Activated B cell treated with CpG ODN at 0.5 μM for 24 hours (primary cell): ENCODE measurements at regions of chrX and their contacts with region 1.

Region 1: DNA sequence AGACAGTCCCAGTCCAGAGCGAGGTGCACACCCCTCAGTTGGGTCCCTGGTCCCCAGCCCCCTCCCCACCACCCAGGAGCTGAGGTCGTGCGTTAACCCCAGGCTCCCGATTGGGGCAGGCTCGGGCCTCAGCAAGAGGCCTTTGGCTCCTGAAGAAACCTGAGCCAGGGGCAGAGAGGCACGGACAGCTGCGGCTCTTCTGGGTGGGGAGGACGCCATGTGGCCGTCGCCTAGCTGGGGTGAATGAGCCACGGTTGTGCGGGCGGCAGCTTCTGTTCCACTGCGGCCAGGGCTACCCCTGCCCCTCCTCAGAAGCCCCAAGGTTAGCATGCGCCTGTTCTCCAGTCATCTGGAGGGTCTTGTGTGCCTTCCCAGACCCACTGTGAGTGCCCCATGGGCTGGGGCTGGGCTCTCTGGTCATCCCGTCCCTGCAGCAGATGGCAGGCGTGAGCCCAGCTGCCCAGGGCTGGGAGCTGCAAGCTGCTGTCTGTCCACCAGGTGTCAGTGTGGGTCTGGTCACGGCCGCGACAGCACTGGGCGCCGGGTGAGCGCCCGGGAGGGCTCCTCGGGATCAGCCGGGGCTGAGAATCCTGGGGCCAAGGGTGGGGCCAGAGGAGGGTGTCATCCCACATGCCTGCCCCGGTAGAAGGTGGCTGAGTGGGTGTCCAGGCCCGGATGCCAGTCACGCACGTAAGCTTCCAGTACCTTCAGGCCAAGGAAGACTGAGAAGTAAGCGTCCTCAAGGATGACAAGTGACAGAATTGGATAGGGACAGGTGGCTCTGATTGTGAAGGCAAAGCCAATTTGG is 21.9 kb downstream of the ATP2B3 start:
- DNase-seq: peak; percentile 42
- ATAC-seq: peak; percentile 94
- H3K4me3 Mint-ChIP-seq: no peak overlapping the region
- H3K27ac Mint-ChIP-seq: no peak overlapping the region
- H3K4me1 Mint-ChIP-seq: no peaks in the 10 kb centered on the region
- H3K27me3 Mint-ChIP-seq: peaks cover 3% of the 10 kb centered on the region
- CTCF ChIP-seq: no peak

Region 2: DNA sequence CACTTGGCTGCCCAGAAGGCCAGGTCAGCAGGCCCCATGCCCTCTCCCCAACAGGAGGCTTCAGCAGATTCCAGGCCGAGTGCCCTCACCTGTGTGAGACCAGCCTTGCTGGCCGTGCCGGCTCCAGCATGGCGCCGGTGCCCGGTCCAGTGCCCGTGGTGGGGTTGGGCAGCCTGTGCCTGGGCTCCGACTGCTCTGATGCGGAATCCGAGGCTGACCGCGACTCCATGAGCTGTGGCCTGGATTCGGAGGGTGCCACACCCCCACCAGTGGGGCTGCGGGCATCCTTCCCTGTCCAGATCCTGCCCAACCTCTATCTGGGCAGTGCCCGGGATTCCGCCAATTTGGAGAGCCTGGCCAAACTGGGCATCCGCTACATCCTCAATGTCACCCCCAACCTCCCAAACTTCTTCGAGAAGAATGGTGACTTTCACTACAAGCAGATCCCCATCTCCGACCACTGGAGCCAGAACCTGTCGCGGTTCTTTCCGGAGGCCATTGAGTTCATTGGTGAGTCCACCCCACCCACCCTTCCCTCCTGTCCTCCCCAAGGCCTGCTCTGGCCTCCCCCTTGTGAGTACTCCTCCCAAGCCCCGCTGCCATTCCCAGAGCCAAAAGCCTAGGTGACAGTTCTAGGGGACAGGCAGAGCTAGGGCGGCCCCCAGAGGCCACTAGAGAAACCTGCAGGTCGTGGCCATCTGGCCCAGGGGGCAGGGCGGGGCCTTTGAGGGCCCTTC is 110.0 kb after region 1 on chrX:
- CTCF ChIA-PET with region 1: interaction called, 13 read pairs
- POLR2A ChIA-PET with region 1: no interaction called
- intact Hi-C with region 1: loop called (anchors 1 kb)
- DNase-seq: no peak
- ATAC-seq: peak; percentile 80
- H3K4me3 Mint-ChIP-seq: no peak overlapping the region
- H3K27ac Mint-ChIP-seq: no peak overlapping the region
- H3K4me1 Mint-ChIP-seq: no peaks in the 10 kb centered on the region
- H3K27me3 Mint-ChIP-seq: peaks cover 1% of the 10 kb centered on the region
- CTCF ChIP-seq: no peak

Region 3: DNA sequence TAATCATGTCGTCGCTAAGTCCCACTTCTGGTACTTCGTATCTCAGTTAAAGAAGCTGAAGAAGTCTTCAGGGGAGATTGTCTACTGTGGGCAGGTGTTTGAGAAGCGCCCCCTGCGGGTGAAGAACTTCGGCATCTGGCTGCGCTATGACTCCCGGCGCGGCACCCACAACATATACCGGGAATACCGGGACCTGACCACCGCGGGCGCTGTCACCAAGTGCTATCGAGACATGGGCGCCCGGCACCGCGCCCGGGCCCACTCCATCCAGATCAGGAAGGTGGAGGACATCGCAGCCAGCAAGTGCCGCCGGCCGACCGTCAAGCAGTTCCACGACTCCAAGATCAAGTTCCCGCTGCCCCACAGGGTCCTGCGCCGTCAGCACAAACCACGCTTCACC is 122.9 kb after region 1 on chrX:
- CTCF ChIA-PET with region 1: interaction called, 30 read pairs
- POLR2A ChIA-PET with region 1: no interaction called
- intact Hi-C with region 1: no loop called
- DNase-seq: peak; percentile 44
- ATAC-seq: no peak
- H3K4me3 Mint-ChIP-seq: peak overlapping the region; percentile 55
- H3K27ac Mint-ChIP-seq: no peak overlapping the region
- H3K4me1 Mint-ChIP-seq: peaks cover 2% of the 10 kb centered on the region
- H3K27me3 Mint-ChIP-seq: peaks cover 11% of the 10 kb centered on the region
- CTCF ChIP-seq: no peak

Region 4: DNA sequence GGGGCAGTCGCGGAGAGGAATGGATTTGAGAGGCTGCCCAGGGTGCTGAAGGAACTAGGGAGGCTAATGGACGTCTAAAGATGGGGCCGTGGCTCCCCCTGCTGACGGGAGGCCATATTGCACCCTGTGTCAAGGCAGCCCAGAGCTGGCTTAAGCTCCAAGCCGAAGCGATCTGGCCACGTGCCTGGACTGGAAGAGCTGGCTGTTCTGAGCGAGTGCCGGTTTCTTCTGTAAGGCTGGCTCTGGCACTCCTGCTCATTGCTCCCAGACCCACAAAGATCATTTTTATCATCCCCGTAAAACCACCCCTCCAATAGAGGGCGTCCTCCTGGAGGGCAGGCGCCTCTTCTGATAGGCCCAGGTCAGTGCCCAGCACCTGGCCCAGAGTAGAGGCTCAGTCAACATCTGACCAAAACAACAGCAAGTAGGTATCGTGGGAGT is 128.6 kb after region 1 on chrX:
- CTCF ChIA-PET with region 1: interaction called, 30 read pairs
- POLR2A ChIA-PET with region 1: no interaction called
- intact Hi-C with region 1: loop called (anchors 1 kb)
- DNase-seq: peak; percentile 66
- ATAC-seq: peak; percentile 90
- H3K4me3 Mint-ChIP-seq: peak overlapping the region; percentile 68
- H3K27ac Mint-ChIP-seq: no peak overlapping the region
- H3K4me1 Mint-ChIP-seq: peaks cover 5% of the 10 kb centered on the region
- H3K27me3 Mint-ChIP-seq: peaks cover 7% of the 10 kb centered on the region
- CTCF ChIP-seq: no peak

Region 5: GRCh38 chrX:153708415-153708814 is 169.0 kb after region 1 on chrX:
- CTCF ChIA-PET with region 1: interaction called, 4 read pairs
- POLR2A ChIA-PET with region 1: no interaction called
- intact Hi-C with region 1: loop called (anchors 1 kb)
- DNase-seq: no peak
- ATAC-seq: peak; percentile 40
- H3K4me3 Mint-ChIP-seq: no peak overlapping the region
- H3K27ac Mint-ChIP-seq: no peak overlapping the region
- H3K4me1 Mint-ChIP-seq: no peaks in the 10 kb centered on the region
- H3K27me3 Mint-ChIP-seq: no peaks in the 10 kb centered on the region
- CTCF ChIP-seq: no peak